ENCODE measurements at regions of chr4 and their contacts with region 1.

Region 1: DNA sequence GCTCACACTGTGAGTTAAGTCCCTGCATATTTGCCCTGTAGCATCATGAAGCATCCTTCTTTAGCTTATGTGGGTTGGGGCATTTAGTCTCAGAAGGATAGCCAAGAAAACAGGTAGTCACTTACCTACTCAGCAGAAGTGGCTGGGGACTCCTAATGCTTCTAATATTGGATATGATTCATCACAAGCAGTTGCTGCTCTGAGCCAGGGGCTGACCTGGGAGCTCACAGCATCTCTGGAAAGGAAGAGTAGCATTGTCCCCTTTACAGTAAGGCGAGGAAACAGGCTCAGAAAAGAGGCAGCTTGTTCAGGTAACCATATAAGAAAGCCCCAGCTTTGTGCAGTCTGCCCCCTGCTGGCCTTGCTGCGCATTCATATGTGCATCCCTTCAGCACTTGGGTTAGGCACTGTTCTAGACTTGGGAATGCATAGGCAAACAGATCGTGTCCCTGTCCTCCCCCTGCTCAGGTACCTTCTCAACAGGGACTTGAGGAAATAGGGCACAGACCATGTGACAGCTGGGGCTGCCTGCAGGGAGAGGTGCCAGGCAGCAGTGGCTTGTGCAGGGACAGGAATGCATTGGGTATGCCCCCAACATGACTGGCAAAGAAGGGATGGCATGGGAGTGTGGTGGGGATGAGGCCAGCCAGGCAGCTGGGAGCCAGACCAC is 35.7 kb upstream of the TBC1D14 start:
- DNase-seq: peak; percentile 82
- H3K4me3 Mint-ChIP-seq: no peak overlapping the region
- H3K27ac Mint-ChIP-seq: no peak overlapping the region
- H3K4me1 Mint-ChIP-seq: peaks cover 4% of the 10 kb centered on the region
- H3K27me3 Mint-ChIP-seq: no peaks in the 10 kb centered on the region

Region 2: GRCh38 chr4:6633041-6633906 is 240.7 kb before region 1 on chr4:
- CTCF ChIA-PET with region 1: no interaction called
- POLR2A ChIA-PET with region 1: no interaction called
- DNase-seq: no peak
- H3K4me3 Mint-ChIP-seq: no peak overlapping the region
- H3K27ac Mint-ChIP-seq: no peak overlapping the region
- H3K4me1 Mint-ChIP-seq: peaks cover 4% of the 10 kb centered on the region
- H3K27me3 Mint-ChIP-seq: no peaks in the 10 kb centered on the region

Region 3: DNA sequence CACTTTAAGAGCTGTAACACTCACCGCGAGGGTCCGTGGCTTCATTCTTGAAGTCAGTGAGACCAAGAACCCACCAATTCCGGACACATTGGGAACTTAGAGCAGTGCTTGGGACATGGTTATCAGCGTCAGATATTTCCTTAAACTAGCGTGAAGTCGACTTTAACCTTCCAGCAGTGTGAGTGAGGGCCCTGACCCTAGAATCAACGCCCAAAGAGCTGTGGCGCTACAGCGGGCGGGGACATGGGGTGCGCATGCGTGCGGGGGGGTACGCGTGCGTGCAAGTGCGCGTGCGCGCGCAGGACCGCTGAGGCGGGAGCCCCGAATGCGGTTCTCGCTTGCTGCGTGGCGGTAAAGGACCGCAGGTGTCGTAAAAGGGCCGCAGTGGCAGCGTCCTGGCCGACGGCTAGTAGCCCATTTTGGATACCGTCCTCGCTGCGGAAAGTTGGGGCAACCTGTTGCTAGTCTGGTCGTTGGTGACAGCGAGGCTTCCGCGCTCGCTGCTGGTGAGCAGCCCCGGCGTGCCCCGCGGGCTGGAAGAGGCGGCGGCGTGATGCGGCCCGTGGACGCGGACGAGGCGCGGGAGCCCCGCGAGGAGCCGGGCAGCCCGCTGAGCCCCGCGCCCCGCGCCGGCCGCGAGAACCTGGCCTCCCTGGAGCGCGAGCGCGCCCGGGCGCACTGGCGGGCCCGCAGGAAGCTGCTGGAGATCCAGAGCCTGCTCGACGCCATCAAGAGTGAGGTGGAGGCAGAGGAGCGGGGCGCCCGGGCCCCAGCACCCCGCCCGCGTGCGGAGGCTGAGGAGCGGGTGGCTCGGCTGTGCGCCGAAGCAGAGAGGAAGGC is 200.0 kb before region 1 on chr4:
- CTCF ChIA-PET with region 1: interaction called, 33 read pairs
- POLR2A ChIA-PET with region 1: interaction called, 20 read pairs
- DNase-seq: peak; percentile 95
- H3K4me3 Mint-ChIP-seq: peak overlapping the region; percentile 97
- H3K27ac Mint-ChIP-seq: peak overlapping the region; percentile 96
- H3K4me1 Mint-ChIP-seq: peaks cover 48% of the 10 kb centered on the region
- H3K27me3 Mint-ChIP-seq: no peaks in the 10 kb centered on the region

Region 4: DNA sequence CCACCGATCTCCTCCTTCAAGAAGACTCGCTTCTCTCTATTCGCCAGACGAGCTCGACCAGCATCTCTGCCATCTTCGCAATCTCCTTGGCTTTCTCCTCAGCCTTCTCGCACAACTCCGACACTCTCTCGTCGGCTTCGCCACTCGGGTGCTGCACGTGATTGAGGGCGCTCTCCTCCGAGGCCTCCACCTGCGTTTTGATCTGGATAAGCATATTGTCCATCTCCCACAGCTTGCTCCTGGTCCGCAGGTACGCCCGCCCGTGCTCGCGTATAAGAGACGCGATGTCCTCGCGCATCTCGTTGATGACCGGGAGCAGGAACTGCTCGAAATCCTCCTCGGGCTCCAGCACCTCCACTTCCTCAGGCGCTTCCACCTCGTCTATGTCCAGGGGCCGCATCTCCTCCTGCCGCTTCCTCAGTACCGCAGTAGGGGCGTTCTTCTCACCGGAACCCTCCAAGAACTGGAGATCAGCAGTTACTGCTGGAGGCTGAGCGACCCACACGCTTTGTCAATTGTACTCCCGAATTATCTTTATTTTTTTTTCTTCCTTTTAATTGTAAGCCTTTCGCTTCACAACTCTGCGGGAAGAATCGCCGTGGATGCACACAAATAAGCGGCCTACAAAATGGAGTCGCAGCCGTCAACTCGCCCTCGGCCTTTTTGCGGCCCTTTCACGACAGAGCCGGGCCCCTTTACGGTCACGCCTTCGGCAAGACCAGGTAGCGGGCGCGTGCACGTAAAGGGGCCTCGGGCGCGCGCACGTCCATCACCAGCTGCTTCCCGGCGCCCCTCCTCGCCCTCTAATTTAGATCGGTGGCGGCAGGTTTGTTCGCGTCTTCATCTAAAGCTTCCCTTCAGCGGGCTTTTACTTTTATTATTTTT is 164.5 kb before region 1 on chr4 and contains the start of gene MRFAP1L1:
- CTCF ChIA-PET with region 1: interaction called, 12 read pairs
- POLR2A ChIA-PET with region 1: interaction called, 3 read pairs
- DNase-seq: peak; percentile 98
- H3K4me3 Mint-ChIP-seq: peak within 1 kb of the TSS; percentile 99
- H3K27ac Mint-ChIP-seq: peak within 1 kb of the TSS; percentile 97
- H3K4me1 Mint-ChIP-seq: peaks cover 49% of the 10 kb centered on the region
- H3K27me3 Mint-ChIP-seq: no peaks in the 10 kb centered on the region
- total RNA-seq, gene MRFAP1L1: 81.9 to 83.1 TPM

Region 5: DNA sequence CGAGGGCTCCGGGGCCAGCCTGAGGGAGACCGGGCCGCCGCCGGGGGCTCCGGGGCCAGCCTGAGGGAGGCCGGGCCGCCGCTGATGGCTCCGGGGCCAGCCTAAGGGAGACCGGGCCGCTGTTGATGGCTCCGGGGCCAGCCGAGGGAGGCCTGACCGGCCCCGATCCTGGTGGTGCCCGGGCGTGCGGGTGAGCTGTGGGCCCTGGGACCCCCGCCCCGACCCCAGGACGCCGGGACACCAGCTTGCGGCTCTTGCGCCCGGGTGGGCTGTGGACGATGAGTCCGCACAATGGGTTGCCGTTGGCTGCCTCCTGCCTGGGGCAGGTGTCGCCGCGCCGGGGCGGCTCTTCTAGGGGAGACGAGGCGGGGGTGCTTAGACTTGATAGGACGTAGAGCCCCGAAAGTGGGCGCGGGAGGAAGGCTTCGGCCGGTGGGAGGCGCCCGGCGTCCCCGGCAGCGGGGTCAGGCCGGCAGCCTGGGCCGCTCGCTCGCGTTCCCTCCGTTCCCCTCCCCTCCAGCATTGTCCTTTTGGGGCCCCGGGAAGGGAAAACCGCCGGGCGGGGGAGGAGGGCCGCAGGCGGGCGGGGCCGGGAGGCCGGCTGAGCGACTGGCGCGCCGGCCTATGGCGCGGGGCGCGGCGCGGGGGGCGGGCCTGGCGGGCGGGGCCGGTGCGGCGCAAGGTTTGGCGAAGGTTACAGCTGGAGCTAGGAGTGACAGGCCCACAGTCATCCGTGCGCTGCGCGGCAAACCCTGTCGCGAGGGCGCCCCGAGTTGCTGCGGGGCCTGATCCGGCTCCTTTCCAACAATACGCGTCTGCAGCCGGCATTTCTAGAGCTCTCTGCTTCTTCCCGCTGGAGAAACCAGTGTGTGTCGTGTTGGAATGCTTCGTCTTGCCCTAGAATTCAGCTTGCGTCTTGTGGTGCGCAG is 90.6 kb before region 1 on chr4:
- CTCF ChIA-PET with region 1: interaction called, 19 read pairs
- POLR2A ChIA-PET with region 1: interaction called, 4 read pairs
- DNase-seq: peak; percentile 92
- H3K4me3 Mint-ChIP-seq: peak overlapping the region; percentile 79
- H3K27ac Mint-ChIP-seq: peak overlapping the region; percentile 79
- H3K4me1 Mint-ChIP-seq: peaks cover 60% of the 10 kb centered on the region
- H3K27me3 Mint-ChIP-seq: peaks cover 2% of the 10 kb centered on the region

Region 6: DNA sequence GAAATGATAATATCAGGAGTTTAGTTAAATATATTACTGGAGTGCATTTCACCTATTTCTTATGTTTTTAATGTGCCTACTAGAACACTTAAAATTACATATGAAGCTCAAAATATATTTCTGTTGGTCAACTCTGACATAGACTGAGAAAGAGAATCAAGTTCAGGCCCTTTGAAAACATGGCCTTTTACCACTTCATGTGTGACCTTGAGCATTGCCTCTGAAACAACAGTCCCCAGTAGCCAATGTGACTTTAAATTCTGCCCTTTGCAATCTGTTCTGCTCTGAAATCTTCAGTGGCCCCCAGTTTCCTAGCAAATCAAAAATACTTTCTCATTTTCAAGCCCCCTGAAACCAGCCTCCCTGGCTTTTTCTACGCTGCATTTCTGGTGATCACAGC is 14.4 kb before region 1 on chr4:
- CTCF ChIA-PET with region 1: interaction called, 28 read pairs
- POLR2A ChIA-PET with region 1: interaction called, 6 read pairs
- DNase-seq: no peak
- H3K4me3 Mint-ChIP-seq: no peak overlapping the region
- H3K27ac Mint-ChIP-seq: no peak overlapping the region
- H3K4me1 Mint-ChIP-seq: peaks cover 28% of the 10 kb centered on the region
- H3K27me3 Mint-ChIP-seq: no peaks in the 10 kb centered on the region

Region 7: GRCh38 chr4:6892190-6892908 is 18.4 kb after region 1 on chr4:
- CTCF ChIA-PET with region 1: interaction called, 58 read pairs
- POLR2A ChIA-PET with region 1: no interaction called
- DNase-seq: peak; percentile 66
- H3K4me3 Mint-ChIP-seq: peak overlapping the region; percentile 48
- H3K27ac Mint-ChIP-seq: peak overlapping the region; percentile 94
- H3K4me1 Mint-ChIP-seq: peaks cover 49% of the 10 kb centered on the region
- H3K27me3 Mint-ChIP-seq: no peaks in the 10 kb centered on the region